ENCODE measurements at regions of chr6 and their contacts with region 1.

Region 1: GRCh38 chr6:24991810-24992467 is 56.2 kb upstream of the RIPOR2 start:
- DNase-seq: peak; percentile 88
- ATAC-seq: peak; percentile 87
- H3K4me3 ChIP-seq: peak overlapping the region in 3 of 5 experiments; percentile 13 to 27 (median 17)
- H3K4me3 Mint-ChIP-seq: peak overlapping the region; percentile 58
- H3K27ac ChIP-seq: peak overlapping the region; percentile 48 to 83
- H3K27ac Mint-ChIP-seq: peak overlapping the region; percentile 90
- H3K4me1 ChIP-seq: peaks cover 53 to 63% of the 10 kb centered on the region in 2 donors
- H3K4me1 Mint-ChIP-seq: peaks cover 75% of the 10 kb centered on the region
- H3K27me3 ChIP-seq: no peaks in the 10 kb centered on the region
- H3K27me3 Mint-ChIP-seq: no peaks in the 10 kb centered on the region
- CTCF ChIP-seq: peak; percentile 86

Region 2: DNA sequence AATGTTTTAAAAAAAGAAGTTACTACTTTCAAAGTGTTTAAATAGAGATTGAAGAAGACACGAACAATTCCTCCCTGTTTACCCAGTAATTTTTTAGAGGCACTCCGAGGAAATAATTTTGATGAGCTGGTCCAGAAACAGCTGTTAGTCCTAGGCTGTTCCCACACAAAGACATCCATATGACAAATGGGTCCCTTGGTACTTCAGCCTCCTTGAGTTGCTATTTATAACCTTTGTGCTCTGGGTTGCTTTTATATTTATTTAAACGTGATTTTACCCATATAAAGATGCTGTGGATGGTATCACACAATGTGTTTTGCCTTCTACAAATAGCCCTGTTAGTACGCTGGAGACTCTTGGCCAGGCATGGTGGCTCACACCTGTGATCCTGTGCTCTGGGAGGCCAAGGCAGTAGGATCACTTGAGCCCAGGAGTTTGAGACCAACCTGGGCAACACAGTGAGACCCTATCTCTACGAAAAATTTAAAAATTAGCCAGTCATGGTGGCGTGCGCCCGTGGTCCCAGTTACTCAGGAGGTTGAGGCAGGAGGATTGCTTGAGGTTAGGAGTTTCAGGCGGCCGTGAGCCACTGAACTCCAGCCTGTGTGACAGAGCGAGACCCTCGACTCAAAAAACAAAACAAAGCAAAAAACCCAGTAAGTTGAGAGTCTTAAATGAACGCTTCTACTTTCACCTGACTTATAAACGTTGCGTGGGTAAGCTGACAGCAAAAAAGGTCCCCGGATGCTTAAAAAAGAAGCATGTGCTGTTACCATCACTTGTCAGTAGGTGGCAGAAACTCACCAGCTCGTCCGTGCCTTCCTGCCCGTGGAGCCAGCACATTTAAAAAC is 136.3 kb before region 1 on chr6:
- CTCF ChIA-PET with region 1: interaction called, 106 read pairs
- POLR2A ChIA-PET with region 1: interaction called, 4 read pairs
- intact Hi-C with region 1: loop called (anchors 1 kb)
- DNase-seq: peak; percentile 86
- ATAC-seq: peak; percentile 42
- H3K4me3 ChIP-seq: no peak overlapping the region
- H3K4me3 Mint-ChIP-seq: peak overlapping the region; percentile 46
- H3K27ac ChIP-seq: peak overlapping the region; percentile 60 to 80
- H3K27ac Mint-ChIP-seq: peak overlapping the region; percentile 97
- H3K4me1 ChIP-seq: peaks cover 62% of the 10 kb centered on the region in 2 donors
- H3K4me1 Mint-ChIP-seq: peaks cover 60% of the 10 kb centered on the region
- H3K27me3 ChIP-seq: no peaks in the 10 kb centered on the region
- H3K27me3 Mint-ChIP-seq: no peaks in the 10 kb centered on the region
- CTCF ChIP-seq: peak; percentile 86

Region 3: GRCh38 chr6:24902782-24903181 is 89.2 kb before region 1 on chr6:
- CTCF ChIA-PET with region 1: interaction called, 148 read pairs
- POLR2A ChIA-PET with region 1: no interaction called
- intact Hi-C with region 1: no loop called
- DNase-seq: no peak
- ATAC-seq: no peak
- H3K4me3 ChIP-seq: no peak overlapping the region
- H3K4me3 Mint-ChIP-seq: peak overlapping the region; percentile 13
- H3K27ac ChIP-seq: peak overlapping the region; percentile 3 to 93
- H3K27ac Mint-ChIP-seq: peak overlapping the region; percentile 85
- H3K4me1 ChIP-seq: peaks cover 88 to 91% of the 10 kb centered on the region in 2 donors
- H3K4me1 Mint-ChIP-seq: peaks cover 88% of the 10 kb centered on the region
- H3K27me3 ChIP-seq: no peaks in the 10 kb centered on the region
- H3K27me3 Mint-ChIP-seq: no peaks in the 10 kb centered on the region
- CTCF ChIP-seq: no peak

Region 4: GRCh38 chr6:24933868-24934401 is 58.0 kb before region 1 on chr6:
- CTCF ChIA-PET with region 1: interaction called, 465 read pairs
- POLR2A ChIA-PET with region 1: interaction called, 106 read pairs
- intact Hi-C with region 1: loop called (anchors 1 kb)
- DNase-seq: peak; percentile 83
- ATAC-seq: peak; percentile 9
- H3K4me3 ChIP-seq: peak overlapping the region; percentile 72 to 100 (median 86)
- H3K4me3 Mint-ChIP-seq: peak overlapping the region; percentile 95
- H3K27ac ChIP-seq: peak overlapping the region; percentile 74 to 93
- H3K27ac Mint-ChIP-seq: peak overlapping the region; percentile 90
- H3K4me1 ChIP-seq: peaks cover 54% of the 10 kb centered on the region in 2 donors
- H3K4me1 Mint-ChIP-seq: peaks cover 68% of the 10 kb centered on the region
- H3K27me3 ChIP-seq: no peaks in the 10 kb centered on the region
- H3K27me3 Mint-ChIP-seq: no peaks in the 10 kb centered on the region
- CTCF ChIP-seq: peak; percentile 89

Region 5: GRCh38 chr6:24968786-24969185 is 23.2 kb before region 1 on chr6:
- CTCF ChIA-PET with region 1: interaction called, 26 read pairs
- POLR2A ChIA-PET with region 1: interaction called, 5 read pairs
- intact Hi-C with region 1: no loop called
- DNase-seq: no peak
- ATAC-seq: no peak
- H3K4me3 ChIP-seq: no peak overlapping the region
- H3K4me3 Mint-ChIP-seq: no peak overlapping the region
- H3K27ac ChIP-seq: no peak overlapping the region
- H3K27ac Mint-ChIP-seq: peak overlapping the region; percentile 7
- H3K4me1 ChIP-seq: peaks cover 34 to 44% of the 10 kb centered on the region in 2 donors
- H3K4me1 Mint-ChIP-seq: peaks cover 82% of the 10 kb centered on the region
- H3K27me3 ChIP-seq: no peaks in the 10 kb centered on the region
- H3K27me3 Mint-ChIP-seq: no peaks in the 10 kb centered on the region
- CTCF ChIP-seq: no peak

Region 6: DNA sequence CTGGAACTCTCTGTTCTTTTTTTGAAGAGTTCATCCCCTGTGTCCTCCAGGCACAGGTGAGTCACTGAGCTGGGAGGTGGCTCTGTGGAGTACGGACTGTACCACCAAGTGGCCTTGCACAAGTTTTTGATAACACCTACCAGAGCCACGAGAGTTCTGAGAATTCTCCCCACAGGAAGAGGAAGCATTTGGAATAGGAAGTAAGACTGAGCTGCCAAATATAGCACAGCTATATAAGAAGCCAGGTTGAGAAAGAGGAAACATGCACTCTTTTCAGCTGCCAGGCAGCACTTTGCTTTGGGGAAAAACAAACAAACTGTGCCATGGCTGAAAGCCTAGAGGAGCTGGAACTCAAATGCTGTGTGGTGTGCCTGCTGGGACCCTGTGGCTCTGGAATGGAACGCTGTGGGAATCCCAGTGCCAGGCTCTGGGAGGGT is 14.6 kb after region 1 on chr6:
- CTCF ChIA-PET with region 1: interaction called, 186 read pairs
- POLR2A ChIA-PET with region 1: interaction called, 17 read pairs
- intact Hi-C with region 1: no loop called
- DNase-seq: peak; percentile 87
- ATAC-seq: peak; percentile 76
- H3K4me3 ChIP-seq: peak overlapping the region in 3 of 5 experiments; percentile 18 to 44 (median 32)
- H3K4me3 Mint-ChIP-seq: peak overlapping the region; percentile 63
- H3K27ac ChIP-seq: peak overlapping the region; percentile 95 to 98
- H3K27ac Mint-ChIP-seq: peak overlapping the region; percentile 92
- H3K4me1 ChIP-seq: peaks cover 47% of the 10 kb centered on the region in 2 donors
- H3K4me1 Mint-ChIP-seq: peaks cover 67% of the 10 kb centered on the region
- H3K27me3 ChIP-seq: no peaks in the 10 kb centered on the region
- H3K27me3 Mint-ChIP-seq: no peaks in the 10 kb centered on the region
- CTCF ChIP-seq: no peak

Measured in B cell (primary cell).